Motor neuron (in vitro differentiated cells): ENCODE measurements at regions of chrX and their contacts with region 1.

Region 1: GRCh38 chrX:9708904-9709553 is 56.6 kb downstream of the GPR143 start:
- ATAC-seq: peak; percentile 51 to 87 (median 78)
- H3K4me3 ChIP-seq: no peak overlapping the region
- H3K27ac ChIP-seq: no peak overlapping the region
- H3K4me1 ChIP-seq: no peaks in the 10 kb centered on the region

Region 2: DNA sequence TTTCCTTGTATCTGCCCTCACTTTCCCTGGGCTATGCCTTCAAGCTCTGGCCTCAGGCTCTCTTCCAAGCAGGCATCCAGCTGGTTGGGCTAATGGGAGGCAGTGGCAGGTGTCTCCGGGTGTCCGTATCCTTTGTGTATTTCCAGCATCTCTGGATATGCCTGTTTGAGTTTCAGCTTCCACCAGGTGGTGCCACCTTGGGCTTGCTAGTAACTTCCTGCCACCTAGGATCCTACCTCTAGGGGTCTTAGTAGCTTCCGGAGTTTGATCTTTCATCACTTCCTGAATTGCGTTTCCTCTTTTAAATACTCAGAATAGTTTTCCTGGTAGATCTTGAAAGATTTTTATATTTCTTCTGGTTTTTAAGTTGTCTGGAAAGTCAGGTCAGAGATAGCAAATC is 953.9 kb before region 1 on chrX:
- in situ Hi-C with region 1: no loop called
- ATAC-seq: no peak
- H3K4me3 ChIP-seq: no peak overlapping the region
- H3K27ac ChIP-seq: no peak overlapping the region
- H3K4me1 ChIP-seq: peaks cover 0 to 4% of the 10 kb centered on the region in 2 donors

Region 3: GRCh38 chrX:8815464-8816065 is 893.5 kb before region 1 on chrX:
- in situ Hi-C with region 1: loop called in 2 of 9 experiments (anchors 25 kb)
- ATAC-seq: peak in 2 of 8 experiments; percentile 29 to 68
- H3K4me3 ChIP-seq: no peak overlapping the region
- H3K27ac ChIP-seq: no peak overlapping the region
- H3K4me1 ChIP-seq: no peaks in the 10 kb centered on the region

Region 4: GRCh38 chrX:9341291-9342201 is 367.5 kb before region 1 on chrX:
- in situ Hi-C with region 1: loop called in 1 of 9 experiments (anchors 25 kb)
- ATAC-seq: peak in 4 of 8 experiments; percentile 4 to 14 (median 10)
- H3K4me3 ChIP-seq: peak overlapping the region in 1 of 5 donors; percentile 6
- H3K27ac ChIP-seq: peak overlapping the region; percentile 6 to 70
- H3K4me1 ChIP-seq: peaks cover 33 to 38% of the 10 kb centered on the region in 2 donors

Region 5: DNA sequence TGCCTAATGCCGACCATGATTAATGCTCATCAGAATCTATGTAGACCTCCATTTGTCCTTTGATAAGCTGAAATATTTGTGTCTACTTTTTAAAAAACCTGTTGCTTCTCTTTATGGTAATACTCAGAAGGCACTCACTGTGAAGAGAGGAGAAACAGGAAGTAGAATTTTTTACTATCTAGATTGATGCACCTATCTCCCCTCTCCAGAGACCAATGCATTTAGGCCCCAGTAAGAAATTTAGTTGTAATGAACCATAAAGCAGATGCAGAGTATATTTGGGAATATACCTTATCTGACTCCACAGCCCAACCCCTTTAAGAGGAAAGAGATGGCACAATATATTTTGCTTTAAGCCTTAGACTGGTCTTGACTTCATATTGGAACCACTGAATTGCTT is 233.0 kb before region 1 on chrX:
- in situ Hi-C with region 1: no loop called
- ATAC-seq: no peak
- H3K4me3 ChIP-seq: no peak overlapping the region
- H3K27ac ChIP-seq: no peak overlapping the region
- H3K4me1 ChIP-seq: no peaks in the 10 kb centered on the region

Region 6: GRCh38 chrX:10119399-10119990 is 410.5 kb after region 1 on chrX:
- in situ Hi-C with region 1: no loop called
- ATAC-seq: peak in 7 of 8 experiments; percentile 46 to 67 (median 58)
- H3K4me3 ChIP-seq: no peak overlapping the region
- H3K27ac ChIP-seq: no peak overlapping the region
- H3K4me1 ChIP-seq: no peaks in the 10 kb centered on the region